HepG2 (cell line): ENCODE measurements at regions of chr10 and their contacts with region 1.

Region 1: GRCh38 chr10:97081621-97082235 is 104.0 kb downstream of the SLIT1 start:
- DNase-seq: peak; percentile 30
- ATAC-seq: peak; percentile 84
- H3K4me3 ChIP-seq: no peak overlapping the region
- H3K27ac ChIP-seq: no peak overlapping the region
- H3K4me1 ChIP-seq: no peaks in the 10 kb centered on the region
- H3K27me3 ChIP-seq: peaks cover 0 to 20% of the 10 kb centered on the region in 2 experiments; a peak in 3 of 5 replicates
- CTCF ChIP-seq: peak; percentile 91
- EP300 ChIP-seq: no peak
- POLR2A ChIP-seq: no peak
- RAD21 ChIP-seq: peak; percentile 86

Region 2: GRCh38 chr10:96380817-96381216 is 700.9 kb before region 1 on chr10:
- CTCF ChIA-PET with region 1: no interaction called
- POLR2A ChIA-PET with region 1: no interaction called
- in situ Hi-C with region 1: no loop called
- intact Hi-C with region 1: no loop called
- DNase-seq: no peak
- ATAC-seq: no peak
- H3K4me3 ChIP-seq: no peak overlapping the region
- H3K27ac ChIP-seq: no peak overlapping the region
- H3K4me1 ChIP-seq: peaks cover under 1% of the 10 kb centered on the region; the same call in 1 of the 2 replicates
- H3K27me3 ChIP-seq: peaks cover 2 to 31% of the 10 kb centered on the region in 2 experiments; a peak in 3 of 5 replicates
- CTCF ChIP-seq: no peak
- EP300 ChIP-seq: no peak
- POLR2A ChIP-seq: no peak
- RAD21 ChIP-seq: no peak

Region 3: GRCh38 chr10:97117372-97117771 is 35.6 kb after region 1 on chr10:
- CTCF ChIA-PET with region 1: no interaction called
- POLR2A ChIA-PET with region 1: no interaction called
- in situ Hi-C with region 1: no loop called
- intact Hi-C with region 1: loop called (anchors 5 kb)
- DNase-seq: no peak
- ATAC-seq: no peak
- H3K4me3 ChIP-seq: no peak overlapping the region
- H3K27ac ChIP-seq: no peak overlapping the region
- H3K4me1 ChIP-seq: peaks cover 7% of the 10 kb centered on the region; the same call in 1 of the 2 replicates
- H3K27me3 ChIP-seq: peaks cover 10 to 74% of the 10 kb centered on the region in 2 experiments; a peak in 4 of 5 replicates
- CTCF ChIP-seq: peak; percentile 41
- EP300 ChIP-seq: no peak
- POLR2A ChIP-seq: no peak
- RAD21 ChIP-seq: no peak

Region 4: DNA sequence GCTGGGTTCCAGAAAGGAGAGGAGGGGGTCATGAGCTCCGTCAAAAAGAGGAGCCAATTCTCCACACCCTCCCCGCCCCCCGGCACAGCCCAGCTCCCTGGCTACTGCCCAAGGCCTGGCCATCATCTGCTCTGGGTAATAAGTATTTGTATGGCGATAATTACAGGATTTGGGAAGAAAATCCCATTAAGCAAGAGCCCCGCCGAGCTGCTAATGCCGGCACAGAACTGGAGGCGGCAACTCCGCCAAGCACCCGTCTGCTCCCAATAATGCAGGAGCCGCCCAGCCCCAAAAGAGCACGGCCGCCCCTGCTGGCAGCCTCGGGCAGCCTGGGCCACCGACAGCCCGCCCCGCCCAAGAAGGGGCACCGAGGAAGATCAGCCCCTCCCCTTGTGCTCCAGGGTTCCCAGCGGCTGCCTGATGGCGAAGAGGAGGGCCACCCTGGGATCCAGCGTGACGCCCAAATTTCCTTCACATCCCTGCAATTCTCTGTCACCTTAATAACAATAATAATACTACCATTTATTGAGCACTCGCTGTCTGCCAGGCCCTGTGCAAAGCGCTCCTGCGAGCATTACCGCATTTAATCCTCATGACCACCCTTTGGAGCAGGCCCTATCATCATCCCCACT is 98.1 kb after region 1 on chr10:
- CTCF ChIA-PET with region 1: interaction called, 16 read pairs
- POLR2A ChIA-PET with region 1: no interaction called
- in situ Hi-C with region 1: no loop called
- intact Hi-C with region 1: loop called (anchors 5 kb)
- DNase-seq: peak; percentile 19
- ATAC-seq: peak; percentile 87
- H3K4me3 ChIP-seq: no peak overlapping the region
- H3K27ac ChIP-seq: no peak overlapping the region
- H3K4me1 ChIP-seq: peaks cover 8% of the 10 kb centered on the region
- H3K27me3 ChIP-seq: peaks cover 13 to 94% of the 10 kb centered on the region in 2 experiments
- CTCF ChIP-seq: peak; percentile 67
- EP300 ChIP-seq: no peak
- POLR2A ChIP-seq: no peak
- RAD21 ChIP-seq: peak; percentile 70

Region 5: DNA sequence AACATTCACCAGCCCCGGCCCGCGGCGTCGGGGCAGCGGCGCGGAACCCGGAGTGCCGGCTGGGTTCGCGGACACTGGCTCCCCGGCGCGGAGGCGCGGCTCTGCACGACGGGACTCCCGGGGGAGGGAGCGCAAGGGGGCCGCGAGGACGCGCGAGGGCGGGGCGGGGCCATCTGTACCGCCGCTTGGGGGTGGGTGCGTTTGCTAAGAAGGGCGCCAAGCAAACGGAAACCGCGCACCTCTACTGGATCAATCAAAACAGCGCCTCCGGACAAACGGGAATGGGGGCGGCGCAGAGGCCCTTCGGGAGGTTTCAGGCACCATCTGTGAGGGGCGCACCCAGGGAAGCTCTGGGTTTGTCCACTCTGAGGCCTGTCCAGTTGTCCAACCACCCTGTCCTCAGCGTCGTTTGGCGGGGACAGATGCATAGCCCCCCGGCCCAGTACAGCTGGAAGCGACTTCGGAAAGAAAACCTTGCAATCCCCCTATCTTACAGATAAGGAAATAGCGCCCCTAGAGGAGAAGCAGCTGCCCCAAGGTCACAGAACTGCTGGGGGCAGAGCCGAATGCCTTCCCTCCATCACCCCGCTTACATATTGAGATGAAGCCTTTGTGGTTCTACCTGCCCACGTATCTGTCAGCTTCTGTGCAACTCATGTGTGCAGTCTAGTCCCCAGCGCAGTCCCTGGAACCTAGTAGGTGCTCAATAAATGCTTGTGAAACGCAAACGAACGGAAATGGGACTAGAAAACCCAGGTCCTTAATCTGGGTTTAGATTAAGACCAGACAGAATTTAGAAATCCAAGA is 114.7 kb after region 1 on chr10:
- CTCF ChIA-PET with region 1: interaction called, 19 read pairs
- POLR2A ChIA-PET with region 1: no interaction called
- in situ Hi-C with region 1: no loop called
- intact Hi-C with region 1: loop called (anchors 5 kb)
- DNase-seq: peak; percentile 47
- ATAC-seq: peak; percentile 82
- H3K4me3 ChIP-seq: peak overlapping the region; percentile 50 to 72 (median 65)
- H3K27ac ChIP-seq: no peak overlapping the region
- H3K4me1 ChIP-seq: peaks cover 7% of the 10 kb centered on the region
- H3K27me3 ChIP-seq: peaks cover 2 to 33% of the 10 kb centered on the region in 2 experiments
- CTCF ChIP-seq: peak; percentile 69
- EP300 ChIP-seq: no peak
- POLR2A ChIP-seq: no peak
- RAD21 ChIP-seq: peak; percentile 58; the same call in 1 of the 2 replicates

Region 6: DNA sequence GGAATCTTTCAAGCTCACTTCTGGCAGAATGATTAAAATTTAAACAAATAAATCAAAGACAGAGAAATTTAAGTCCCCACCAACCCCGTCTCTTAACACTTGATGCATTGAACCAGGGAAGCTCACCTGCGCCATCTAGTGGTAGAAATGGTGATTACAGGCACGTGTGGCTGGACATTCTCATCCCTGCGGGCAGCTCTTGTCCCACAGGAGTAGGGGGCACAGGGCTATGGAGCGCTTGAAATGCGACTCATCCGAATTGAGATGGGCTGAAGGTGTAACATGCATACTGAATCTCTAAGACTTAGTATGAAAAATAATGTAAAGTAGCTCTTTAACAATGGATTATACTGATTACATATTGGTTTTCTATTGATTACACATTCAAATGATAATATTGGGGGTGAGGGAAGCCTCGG is 128.8 kb after region 1 on chr10:
- CTCF ChIA-PET with region 1: interaction called, 18 read pairs
- POLR2A ChIA-PET with region 1: no interaction called
- in situ Hi-C with region 1: no loop called
- intact Hi-C with region 1: no loop called
- DNase-seq: peak; percentile 61
- ATAC-seq: peak; percentile 80
- H3K4me3 ChIP-seq: no peak overlapping the region
- H3K27ac ChIP-seq: no peak overlapping the region
- H3K4me1 ChIP-seq: peaks cover 8% of the 10 kb centered on the region
- H3K27me3 ChIP-seq: peaks cover 0 to 5% of the 10 kb centered on the region in 2 experiments; a peak in 2 of 5 replicates
- CTCF ChIP-seq: peak; percentile 89
- EP300 ChIP-seq: no peak
- POLR2A ChIP-seq: no peak
- RAD21 ChIP-seq: peak; percentile 84